HepG2 (cell line): ENCODE measurements at regions of chr17 and their contacts with region 1.

Region 1: GRCh38 chr17:39738931-39739884 is 1.5 kb downstream of the GRB7 start:
- DNase-seq: peak; percentile 100
- ATAC-seq: peak; percentile 69
- H3K4me3 ChIP-seq: peak overlapping the region; percentile 89 to 96 (median 95)
- H3K27ac ChIP-seq: peak overlapping the region; percentile 97
- H3K4me1 ChIP-seq: peaks cover 44% of the 10 kb centered on the region
- H3K27me3 ChIP-seq: no peaks in the 10 kb centered on the region; a peak in 1 of 5 replicates
- CTCF ChIP-seq: peak; percentile 40
- EP300 ChIP-seq: peak in 1 of 2 experiments; percentile 76; a peak in 2 of 4 replicates
- POLR2A ChIP-seq: peak; percentile 72 to 79
- RAD21 ChIP-seq: peak; percentile 44

Region 2: DNA sequence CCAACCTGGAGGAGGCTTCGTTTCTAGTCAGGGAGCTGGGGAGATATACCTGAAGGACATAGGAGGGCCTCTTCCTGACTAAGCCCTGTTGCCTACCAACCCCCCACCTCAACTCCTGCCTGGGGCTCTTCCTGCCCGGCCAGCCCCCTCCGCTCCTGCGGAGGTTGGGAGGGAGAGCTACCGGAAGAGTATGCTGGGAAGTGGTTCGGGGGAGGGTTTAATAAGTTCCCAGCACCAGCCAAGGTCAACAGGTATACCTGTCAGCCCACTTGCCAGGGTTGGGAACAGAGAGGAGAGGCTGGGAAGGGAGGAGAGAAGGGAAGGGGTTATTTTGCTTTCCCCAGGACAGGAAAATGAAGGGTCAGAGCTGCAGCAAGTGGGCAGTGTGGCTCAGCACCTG is 107.8 kb before region 1 on chr17:
- CTCF ChIA-PET with region 1: no interaction called
- POLR2A ChIA-PET with region 1: interaction called, 10 read pairs
- in situ Hi-C with region 1: no loop called
- intact Hi-C with region 1: no loop called
- DNase-seq: no peak
- ATAC-seq: no peak
- H3K4me3 ChIP-seq: peak overlapping the region in 1 of 3 experiments; percentile 45; a peak in 2 of 6 replicates
- H3K27ac ChIP-seq: no peak overlapping the region
- H3K4me1 ChIP-seq: peaks cover 95% of the 10 kb centered on the region
- H3K27me3 ChIP-seq: peaks cover 20 to 63% of the 10 kb centered on the region in 2 experiments; a peak in 4 of 5 replicates
- CTCF ChIP-seq: no peak
- EP300 ChIP-seq: no peak
- POLR2A ChIP-seq: no peak
- RAD21 ChIP-seq: no peak

Region 3: DNA sequence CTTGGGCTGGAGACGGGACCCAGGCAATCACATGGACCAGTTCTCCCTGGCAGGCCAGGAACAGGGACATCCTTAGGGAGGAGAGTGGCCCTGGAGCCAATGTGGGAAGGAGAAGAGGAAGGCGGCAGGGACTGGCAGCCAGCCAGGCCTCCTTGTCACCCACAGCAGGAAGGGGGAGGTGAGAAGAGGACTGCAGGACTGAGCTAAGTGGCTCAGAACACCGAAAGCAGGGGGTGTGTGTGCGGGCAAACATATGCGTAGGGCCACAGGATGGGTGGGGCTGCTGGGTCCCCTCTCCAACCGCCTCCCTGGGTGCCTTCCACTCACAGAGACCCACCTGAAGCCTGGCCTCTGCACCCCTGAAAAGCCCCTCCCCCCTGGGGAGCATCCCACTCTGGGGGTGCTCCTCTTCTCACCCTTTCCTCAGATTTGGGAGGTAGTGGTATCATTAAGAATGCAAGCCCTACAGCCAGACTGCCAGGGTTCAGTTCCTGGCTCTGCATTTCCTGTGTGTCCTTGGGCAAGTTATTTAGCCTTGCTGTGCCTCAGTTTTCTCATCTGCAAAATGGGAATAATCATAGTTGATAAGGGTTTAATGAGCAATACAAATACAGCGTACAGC is 62.9 kb before region 1 on chr17:
- CTCF ChIA-PET with region 1: no interaction called
- POLR2A ChIA-PET with region 1: interaction called, 11 read pairs
- in situ Hi-C with region 1: no loop called
- intact Hi-C with region 1: no loop called
- DNase-seq: no peak
- ATAC-seq: no peak
- H3K4me3 ChIP-seq: no peak overlapping the region
- H3K27ac ChIP-seq: peak overlapping the region; percentile 41
- H3K4me1 ChIP-seq: peaks cover 81% of the 10 kb centered on the region
- H3K27me3 ChIP-seq: peaks cover 0 to 3% of the 10 kb centered on the region in 2 experiments; a peak in 2 of 5 replicates
- CTCF ChIP-seq: no peak
- EP300 ChIP-seq: no peak
- POLR2A ChIP-seq: no peak
- RAD21 ChIP-seq: no peak

Region 4: DNA sequence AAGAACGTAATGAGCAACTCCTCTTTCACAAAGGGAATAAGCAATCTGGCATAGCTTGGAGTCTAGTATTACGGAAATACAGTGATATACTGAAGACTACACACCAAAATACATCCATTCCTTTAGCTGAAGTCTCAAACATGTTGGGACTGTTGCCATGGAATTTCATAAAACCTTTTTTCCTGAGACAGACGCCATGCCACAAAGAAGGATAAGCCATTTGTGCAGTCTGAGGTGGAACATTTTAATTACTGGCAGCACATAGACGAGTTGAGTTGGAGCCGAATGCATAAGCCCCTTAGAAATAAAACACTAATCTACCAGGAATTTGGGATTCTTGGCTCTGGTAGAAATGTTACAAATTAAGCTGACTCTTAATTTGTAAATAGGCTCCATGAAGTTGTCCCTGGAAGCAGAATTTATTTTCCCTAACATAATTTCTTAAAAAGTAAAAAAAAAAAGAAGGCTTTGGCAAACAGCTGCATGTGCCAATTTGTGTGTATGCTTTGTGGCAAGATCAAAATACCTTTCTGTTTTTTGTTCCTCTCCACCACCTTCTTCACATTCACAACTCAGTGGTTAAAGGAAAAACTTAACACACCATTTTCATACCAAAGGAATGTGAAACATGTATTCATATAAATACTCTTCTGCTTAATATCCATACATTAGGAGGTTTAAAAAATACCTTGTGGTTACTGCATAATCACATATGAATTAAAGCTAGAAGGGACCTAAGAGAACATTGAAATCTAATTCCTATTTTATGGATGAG is 24.0 kb after region 1 on chr17:
- CTCF ChIA-PET with region 1: no interaction called
- POLR2A ChIA-PET with region 1: no interaction called
- in situ Hi-C with region 1: no loop called
- intact Hi-C with region 1: no loop called
- DNase-seq: no peak
- ATAC-seq: no peak
- H3K4me3 ChIP-seq: no peak overlapping the region
- H3K27ac ChIP-seq: no peak overlapping the region
- H3K4me1 ChIP-seq: peaks cover 15% of the 10 kb centered on the region
- H3K27me3 ChIP-seq: peaks cover 1 to 62% of the 10 kb centered on the region in 2 experiments
- CTCF ChIP-seq: no peak
- EP300 ChIP-seq: no peak
- POLR2A ChIP-seq: no peak
- RAD21 ChIP-seq: no peak